ENCODE measurements at regions of chr1 and their contacts with region 1.

Region 1: DNA sequence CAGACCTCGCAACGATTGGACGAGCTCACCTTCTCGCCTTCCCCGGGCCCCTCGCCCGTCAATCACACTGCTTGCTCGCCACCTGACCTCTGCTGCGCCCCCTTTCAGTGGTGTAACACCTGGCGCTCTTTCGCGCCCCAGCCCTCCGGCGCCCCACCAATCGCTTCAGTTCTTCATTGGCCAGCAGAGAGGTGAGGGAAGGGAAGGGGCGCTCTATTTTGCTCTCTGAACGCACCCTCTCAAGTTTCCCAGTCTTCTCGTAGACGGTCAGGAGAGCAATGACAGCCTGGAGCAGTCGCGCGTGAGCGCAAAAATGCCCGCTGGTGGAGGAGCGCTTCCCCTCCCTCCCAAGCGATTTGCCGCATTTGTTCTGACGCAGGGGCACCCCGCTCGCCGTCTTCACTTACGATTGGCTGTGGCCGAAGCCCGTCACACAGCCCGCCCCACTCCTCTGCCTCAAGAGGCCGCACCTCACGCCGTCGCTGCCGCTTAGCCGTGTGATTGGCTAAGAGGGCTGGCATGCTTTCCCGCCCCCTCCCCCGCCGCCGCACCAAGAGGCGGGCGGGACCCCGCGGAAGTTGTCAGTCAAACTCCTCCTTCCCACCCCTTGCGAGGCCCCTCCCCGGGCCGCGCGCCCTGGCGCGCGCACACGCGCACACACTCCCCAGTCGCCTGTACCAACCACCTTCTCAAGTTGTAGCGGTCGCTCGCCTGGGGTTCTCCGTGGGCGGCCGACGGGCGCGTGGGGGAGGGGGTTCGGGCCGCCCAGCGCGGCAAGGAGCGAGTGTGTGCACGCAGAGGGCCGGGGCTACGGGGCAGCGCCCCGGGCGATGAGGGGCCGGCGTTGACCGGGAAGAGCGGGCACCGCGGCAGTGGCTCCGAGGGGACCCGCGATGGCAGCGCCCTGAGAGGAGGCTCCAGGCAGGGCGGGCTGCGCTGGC is at the start of gene PPP2R5A:
- DNase-seq: peak; percentile 95 to 99 (median 99)
- ATAC-seq: peak; percentile 92
- H3K4me3 ChIP-seq: peak within 1 kb of the TSS; percentile 96
- H3K4me3 Mint-ChIP-seq: peak within 1 kb of the TSS; percentile 94 to 100 (median 98)
- H3K27ac ChIP-seq: peak within 1 kb of the TSS; percentile 96
- H3K27ac Mint-ChIP-seq: peak within 1 kb of the TSS; percentile 96 to 99 (median 98)
- H3K4me1 ChIP-seq: peaks cover 19 to 26% of the 10 kb centered on the region in 2 donors
- H3K4me1 Mint-ChIP-seq: peaks cover 21 to 49% (median 43%) of the 10 kb centered on the region in 7 donors
- H3K27me3 ChIP-seq: no peaks in the 10 kb centered on the region
- H3K27me3 Mint-ChIP-seq: peaks cover 0 to 6% (median 0%) of the 10 kb centered on the region in 5 donors
- total RNA-seq, gene PPP2R5A: 38.5 to 52.7 (median 49.8) TPM

Region 2: DNA sequence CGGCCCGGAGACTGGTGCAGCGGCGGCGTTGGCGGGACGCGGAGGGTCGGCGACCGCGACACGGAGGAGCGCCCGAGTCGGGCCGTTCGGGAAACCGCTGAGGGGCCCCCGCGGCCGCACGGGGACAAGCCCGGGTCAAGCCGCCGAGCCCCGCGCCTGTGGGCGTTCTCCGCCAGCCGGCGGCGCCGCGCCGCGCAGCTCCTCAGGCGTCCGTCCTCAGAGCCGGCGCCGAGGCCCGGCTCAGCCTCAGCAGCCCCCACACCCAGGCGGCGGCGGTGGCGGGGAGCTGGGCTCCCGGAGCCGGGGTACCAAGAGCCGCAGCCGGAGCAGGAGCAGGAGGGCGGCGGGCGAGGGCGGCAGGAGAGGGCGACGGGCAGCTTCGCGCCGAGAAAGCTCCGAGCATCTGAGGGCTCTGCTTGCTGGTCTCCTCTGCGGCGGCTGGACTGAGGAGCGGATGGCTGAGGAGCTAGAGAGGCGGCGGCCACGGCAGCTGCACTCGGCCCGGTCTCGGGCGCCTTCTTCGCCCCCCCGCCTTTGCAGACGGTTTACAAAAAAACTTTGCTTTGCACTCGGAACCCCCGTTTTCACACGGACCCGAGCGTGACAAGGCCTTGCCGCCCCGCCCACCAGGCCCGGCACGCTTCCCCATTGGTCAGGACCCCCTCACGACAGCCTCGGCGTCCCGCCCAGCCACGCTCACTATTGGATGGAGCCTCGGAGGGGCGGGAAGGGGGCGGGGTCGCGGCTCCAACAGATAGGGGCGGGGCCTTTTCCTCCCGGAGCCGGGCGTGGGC is 706.2 kb before region 1 on chr1 and contains the start of gene SLC30A1:
- CTCF ChIA-PET with region 1: no interaction called
- POLR2A ChIA-PET with region 1: no interaction called
- intact Hi-C with region 1: loop called (anchors 1 to 2 kb)
- DNase-seq: peak; percentile 99
- ATAC-seq: peak; percentile 97
- H3K4me3 ChIP-seq: peak within 1 kb of the TSS; percentile 66
- H3K4me3 Mint-ChIP-seq: peak within 1 kb of the TSS; percentile 88 to 96 (median 92)
- H3K27ac ChIP-seq: peak within 1 kb of the TSS; percentile 85
- H3K27ac Mint-ChIP-seq: peak within 1 kb of the TSS; percentile 72 to 93 (median 88)
- H3K4me1 ChIP-seq: peaks cover 3 to 5% of the 10 kb centered on the region in 2 donors
- H3K4me1 Mint-ChIP-seq: peaks cover 21 to 48% (median 44%) of the 10 kb centered on the region in 7 donors
- H3K27me3 ChIP-seq: no peaks in the 10 kb centered on the region
- H3K27me3 Mint-ChIP-seq: peaks cover 0 to 12% (median 0%) of the 10 kb centered on the region in 5 donors
- total RNA-seq, gene SLC30A1: 5.8 to 12.1 (median 8.8) TPM

Region 3: DNA sequence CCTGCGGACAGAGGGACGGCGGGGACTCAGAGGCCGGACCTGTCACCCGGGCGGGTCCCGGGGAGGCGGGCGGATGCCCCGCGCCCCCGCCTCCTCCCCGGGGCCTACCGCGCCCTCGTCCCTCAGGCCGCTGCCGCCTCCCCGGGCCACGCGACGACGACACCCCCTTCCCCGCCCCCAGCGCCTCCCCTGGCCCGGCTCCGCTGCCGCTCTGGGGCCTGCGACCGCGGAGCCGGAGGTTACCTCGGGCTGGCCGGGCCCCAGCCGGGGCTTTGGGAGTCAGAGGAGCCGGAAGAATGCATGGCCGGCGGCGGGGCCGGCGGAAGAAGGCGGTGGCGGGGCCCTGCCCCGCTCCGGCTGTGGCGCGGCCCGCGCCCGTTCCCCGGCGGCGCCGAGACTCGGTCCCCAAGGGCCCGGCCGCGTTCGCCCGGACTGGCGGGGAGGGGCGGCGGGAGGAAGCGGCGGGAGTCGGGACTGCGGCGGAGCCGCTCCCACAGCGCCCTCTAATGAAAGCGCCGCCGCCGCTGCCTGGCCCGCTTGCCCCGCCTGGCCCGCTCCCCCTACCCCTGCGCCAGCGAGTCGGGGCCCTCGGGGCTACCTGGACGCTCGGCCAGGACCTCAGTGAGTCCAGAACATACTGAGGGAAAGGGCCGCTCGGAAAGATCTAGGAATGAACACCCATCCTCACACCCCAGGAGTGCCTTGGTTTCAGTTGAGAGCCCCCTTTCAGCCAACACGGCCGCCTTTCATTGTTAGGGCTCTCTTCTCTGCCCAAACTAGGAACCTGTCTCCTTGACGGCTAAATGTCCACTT is 454.5 kb before region 1 on chr1 and contains the start of gene LPGAT1:
- CTCF ChIA-PET with region 1: no interaction called
- POLR2A ChIA-PET with region 1: no interaction called
- intact Hi-C with region 1: loop called (anchors 1 to 5 kb)
- DNase-seq: peak; percentile 28 to 81 (median 54)
- ATAC-seq: peak; percentile 92
- H3K4me3 ChIP-seq: peak within 1 kb of the TSS; percentile 68
- H3K4me3 Mint-ChIP-seq: peak within 1 kb of the TSS; percentile 88 to 97 (median 90)
- H3K27ac ChIP-seq: peak within 1 kb of the TSS; percentile 64
- H3K27ac Mint-ChIP-seq: peak within 1 kb of the TSS; percentile 60 to 94 (median 85)
- H3K4me1 ChIP-seq: peaks cover 20 to 40% of the 10 kb centered on the region in 2 donors
- H3K4me1 Mint-ChIP-seq: peaks cover 34 to 69% (median 64%) of the 10 kb centered on the region in 7 donors
- H3K27me3 ChIP-seq: no peaks in the 10 kb centered on the region
- H3K27me3 Mint-ChIP-seq: peaks cover 0 to 3% (median 0%) of the 10 kb centered on the region in 5 donors
- total RNA-seq, gene LPGAT1: 11.7 to 76.1 (median 19.3) TPM

Region 4: GRCh38 chr1:212186427-212187207 is 98.4 kb before region 1 on chr1:
- CTCF ChIA-PET with region 1: no interaction called
- POLR2A ChIA-PET with region 1: no interaction called
- intact Hi-C with region 1: loop called in 1 of 2 experiments (anchors 2 kb)
- DNase-seq: peak in 3 of 9 donors; percentile 11 to 20 (median 15)
- ATAC-seq: peak; percentile 81
- H3K4me3 ChIP-seq: peak overlapping the region; percentile 38
- H3K4me3 Mint-ChIP-seq: peak overlapping the region; percentile 38 to 84 (median 80)
- H3K27ac ChIP-seq: peak overlapping the region; percentile 23
- H3K27ac Mint-ChIP-seq: peak overlapping the region; percentile 39 to 93 (median 87)
- H3K4me1 ChIP-seq: peaks cover 4 to 7% of the 10 kb centered on the region in 2 donors
- H3K4me1 Mint-ChIP-seq: peaks cover 15 to 38% (median 26%) of the 10 kb centered on the region in 7 donors
- H3K27me3 ChIP-seq: no peaks in the 10 kb centered on the region
- H3K27me3 Mint-ChIP-seq: no peaks in the 10 kb centered on the region

Region 5: GRCh38 chr1:212368073-212368484 is 83.1 kb after region 1 on chr1:
- CTCF ChIA-PET with region 1: no interaction called
- POLR2A ChIA-PET with region 1: interaction called, 3 read pairs
- intact Hi-C with region 1: loop called (anchors 2 to 5 kb)
- DNase-seq: peak in 7 of 9 donors; percentile 34 to 67 (median 63)
- ATAC-seq: peak; percentile 95
- H3K4me3 ChIP-seq: no peak overlapping the region
- H3K4me3 Mint-ChIP-seq: no peak overlapping the region
- H3K27ac ChIP-seq: no peak overlapping the region
- H3K27ac Mint-ChIP-seq: peak overlapping the region in 4 of 9 donors; percentile 5 to 87 (median 52)
- H3K4me1 ChIP-seq: no peaks in the 10 kb centered on the region
- H3K4me1 Mint-ChIP-seq: peaks cover 0 to 9% (median 0%) of the 10 kb centered on the region in 7 donors
- H3K27me3 ChIP-seq: no peaks in the 10 kb centered on the region
- H3K27me3 Mint-ChIP-seq: no peaks in the 10 kb centered on the region

Region 6: DNA sequence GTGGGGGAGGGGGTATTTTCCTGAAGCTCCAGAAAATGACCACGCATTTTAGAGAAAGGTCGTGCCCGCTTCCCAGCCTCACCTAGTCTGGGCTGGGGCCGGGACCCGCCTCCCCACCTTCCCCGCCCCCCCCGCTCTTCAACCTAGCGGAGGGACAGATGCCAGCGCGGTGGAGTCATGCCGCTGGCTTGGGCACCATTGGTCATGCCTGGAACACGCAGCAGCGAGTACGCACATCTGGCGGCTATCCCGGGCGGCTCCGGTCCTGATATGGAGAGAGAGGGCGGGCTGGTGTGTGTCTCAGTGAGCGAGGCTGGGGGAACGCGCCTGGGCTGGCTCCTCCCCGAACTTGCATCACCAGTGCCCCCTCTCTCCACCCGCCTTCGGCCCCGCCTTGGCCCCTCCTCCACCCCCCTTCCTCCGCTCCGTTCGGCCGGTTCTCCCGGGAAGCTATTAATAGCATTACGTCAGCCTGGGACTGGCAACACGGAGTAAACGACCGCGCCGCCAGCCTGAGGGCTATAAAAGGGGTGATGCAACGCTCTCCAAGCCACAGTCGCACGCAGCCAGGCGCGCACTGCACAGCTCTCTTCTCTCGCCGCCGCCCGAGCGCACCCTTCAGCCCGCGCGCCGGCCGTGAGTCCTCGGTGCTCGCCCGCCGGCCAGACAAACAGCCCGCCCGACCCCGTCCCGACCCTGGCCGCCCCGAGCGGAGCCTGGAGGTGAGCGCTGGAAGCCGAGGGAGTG is 323.4 kb after region 1 on chr1 and contains the start of gene ATF3:
- CTCF ChIA-PET with region 1: no interaction called
- POLR2A ChIA-PET with region 1: no interaction called
- intact Hi-C with region 1: loop called (anchors 1 kb)
- DNase-seq: peak; percentile 27 to 90 (median 47)
- ATAC-seq: peak; percentile 87
- H3K4me3 ChIP-seq: peak within 1 kb of the TSS; percentile 70
- H3K4me3 Mint-ChIP-seq: peak within 1 kb of the TSS; percentile 90 to 98 (median 95)
- H3K27ac ChIP-seq: no peak within 1 kb of the TSS
- H3K27ac Mint-ChIP-seq: peak within 1 kb of the TSS; percentile 40 to 98 (median 76)
- H3K4me1 ChIP-seq: peaks cover 17 to 23% of the 10 kb centered on the region in 2 donors
- H3K4me1 Mint-ChIP-seq: peaks cover 17 to 55% (median 21%) of the 10 kb centered on the region in 7 donors
- H3K27me3 ChIP-seq: peaks cover 17 to 26% of the 10 kb centered on the region in 2 donors
- H3K27me3 Mint-ChIP-seq: peaks cover 47 to 66% (median 58%) of the 10 kb centered on the region in 5 donors
- total RNA-seq, gene ATF3: 0.57 to 83.4 (median 12.5) TPM

Region 7: GRCh38 chr1:214281021-214281719 is 1996.2 kb after region 1 on chr1 and contains the start of gene SMYD2:
- CTCF ChIA-PET with region 1: no interaction called
- POLR2A ChIA-PET with region 1: no interaction called
- intact Hi-C with region 1: loop called in 1 of 2 experiments (anchors 10 kb)
- DNase-seq: peak; percentile 49 to 77 (median 72)
- ATAC-seq: peak; percentile 86
- H3K4me3 ChIP-seq: peak within 1 kb of the TSS; percentile 88
- H3K4me3 Mint-ChIP-seq: peak within 1 kb of the TSS; percentile 79 to 98 (median 90)
- H3K27ac ChIP-seq: peak within 1 kb of the TSS; percentile 82
- H3K27ac Mint-ChIP-seq: peak within 1 kb of the TSS; percentile 81 to 95 (median 91)
- H3K4me1 ChIP-seq: peaks cover 17 to 34% of the 10 kb centered on the region in 2 donors
- H3K4me1 Mint-ChIP-seq: peaks cover 30 to 64% (median 45%) of the 10 kb centered on the region in 7 donors
- H3K27me3 ChIP-seq: no peaks in the 10 kb centered on the region
- H3K27me3 Mint-ChIP-seq: no peaks in the 10 kb centered on the region
- total RNA-seq, gene SMYD2: 24.3 to 39.5 (median 34.4) TPM